A673 (cell line): ENCODE measurements at regions of chr9 and their contacts with region 1.

Region 1: GRCh38 chr9:108761655-108762347 is 94.0 kb downstream of the ACTL7B start:
- DNase-seq: peak; percentile 64
- H3K4me3 ChIP-seq: no peak overlapping the region
- H3K27ac ChIP-seq: no peak overlapping the region
- H3K4me1 ChIP-seq: peaks cover 2% of the 10 kb centered on the region
- H3K27me3 ChIP-seq: no peaks in the 10 kb centered on the region
- CTCF ChIP-seq: peak; percentile 86

Region 2: GRCh38 chr9:107425101-107426045 is 1336.4 kb before region 1 on chr9:
- CTCF ChIA-PET with region 1: no interaction called
- POLR2A ChIA-PET with region 1: no interaction called
- intact Hi-C with region 1: loop called (anchors 2 kb)
- DNase-seq: peak; percentile 73
- H3K4me3 ChIP-seq: no peak overlapping the region
- H3K27ac ChIP-seq: no peak overlapping the region
- H3K4me1 ChIP-seq: no peaks in the 10 kb centered on the region
- H3K27me3 ChIP-seq: no peaks in the 10 kb centered on the region
- CTCF ChIP-seq: peak; percentile 96

Region 3: DNA sequence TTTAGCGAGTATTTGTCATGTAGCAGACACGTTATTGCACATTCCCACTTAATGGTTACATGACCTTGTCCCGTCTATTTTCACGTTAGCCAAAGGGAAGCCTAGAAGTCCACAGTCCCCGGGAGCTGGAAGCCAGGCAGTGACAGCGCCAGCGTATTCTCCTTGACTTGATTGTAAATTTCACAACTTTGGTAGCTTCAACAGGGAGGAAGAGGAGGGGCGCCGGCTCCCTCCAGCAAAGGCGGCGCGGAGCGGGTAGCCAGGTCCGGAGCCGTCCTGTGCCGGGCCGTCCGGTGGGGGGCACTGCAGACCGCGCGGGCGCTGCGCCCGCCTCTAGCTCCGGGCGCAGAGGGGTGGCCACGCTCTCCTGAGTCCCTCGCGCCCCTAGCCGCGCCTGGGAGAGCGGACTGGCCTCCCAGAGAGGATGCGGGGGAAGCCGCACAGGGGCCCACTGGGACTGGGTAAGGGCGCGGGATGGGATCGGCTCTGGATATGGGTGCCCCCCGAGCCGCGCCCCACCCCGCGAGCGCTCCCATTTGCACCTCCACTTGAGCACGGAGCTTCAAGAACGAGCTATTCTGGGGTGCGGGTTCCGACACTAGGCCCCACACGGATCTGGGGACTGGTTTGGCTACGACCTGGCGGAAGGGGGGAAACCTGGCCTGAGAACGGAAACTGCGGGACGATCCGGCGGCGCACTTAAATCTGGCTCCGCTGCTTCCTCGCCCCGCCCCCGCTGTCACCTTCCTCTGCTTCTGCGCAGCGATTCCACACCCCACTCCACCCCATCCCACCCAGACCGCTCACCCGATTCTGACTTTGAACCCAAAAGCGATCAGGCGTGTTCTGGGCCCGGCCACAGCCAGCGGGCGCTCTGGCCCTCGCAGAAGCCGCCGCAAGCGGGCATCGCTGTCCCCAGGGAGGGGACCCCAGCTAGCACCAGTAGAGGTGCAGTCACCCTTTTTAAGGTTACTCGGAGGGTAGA is 1296.0 kb before region 1 on chr9:
- CTCF ChIA-PET with region 1: no interaction called
- POLR2A ChIA-PET with region 1: no interaction called
- intact Hi-C with region 1: loop called (anchors 5 kb)
- DNase-seq: peak; percentile 61
- H3K4me3 ChIP-seq: peak overlapping the region; percentile 29
- H3K27ac ChIP-seq: no peak overlapping the region
- H3K4me1 ChIP-seq: peaks cover 3% of the 10 kb centered on the region
- H3K27me3 ChIP-seq: peaks cover 33% of the 10 kb centered on the region
- CTCF ChIP-seq: peak; percentile 69

Region 4: DNA sequence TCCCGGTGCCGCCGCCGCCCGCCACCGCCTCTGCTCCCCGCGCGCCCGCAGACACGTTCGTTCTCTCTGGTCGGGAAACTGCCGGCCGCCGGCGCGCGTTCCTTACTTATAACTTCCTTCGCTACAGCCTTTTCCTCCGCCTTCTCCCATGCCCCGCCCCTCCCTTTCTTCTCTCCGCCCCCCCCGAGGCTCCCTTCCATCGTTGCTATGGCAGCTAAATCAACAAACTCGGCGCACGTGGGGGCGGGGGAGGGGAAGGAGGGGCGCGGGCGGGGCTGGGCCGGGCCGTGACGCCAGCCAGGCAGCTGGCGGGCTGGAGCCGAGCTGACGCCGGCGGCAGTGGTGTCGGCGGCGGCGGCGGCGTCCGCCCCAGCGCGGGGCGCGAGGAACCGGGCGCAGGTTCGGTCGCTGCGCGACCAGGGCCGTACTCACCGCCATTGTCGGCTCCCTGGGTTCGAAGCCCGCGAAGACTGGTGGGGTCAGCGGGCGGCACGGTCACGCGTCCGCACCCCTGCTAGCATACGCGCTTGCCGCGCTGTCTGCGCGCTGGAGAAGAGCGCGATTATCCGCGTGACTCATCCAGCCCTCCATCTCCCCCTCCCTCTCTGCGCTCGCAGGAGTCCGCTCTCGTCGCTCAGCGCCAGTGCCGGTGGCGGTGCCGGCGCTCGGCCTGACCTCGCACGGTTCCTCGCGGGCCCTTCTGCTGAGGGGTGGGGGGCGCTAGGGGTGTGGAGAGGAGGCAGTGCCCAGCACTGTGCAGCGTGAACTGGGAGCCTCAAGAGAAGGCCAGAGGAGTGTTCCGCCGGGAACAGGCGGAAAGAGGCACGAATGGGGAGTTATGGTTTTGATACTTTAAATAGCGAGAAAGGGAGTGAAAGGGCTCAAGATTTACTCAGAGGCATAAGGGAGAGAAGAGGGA is 1271.9 kb before region 1 on chr9 and contains the start of gene KLF4:
- CTCF ChIA-PET with region 1: no interaction called
- POLR2A ChIA-PET with region 1: no interaction called
- intact Hi-C with region 1: loop called (anchors 5 kb)
- DNase-seq: peak; percentile 95
- H3K4me3 ChIP-seq: peak within 1 kb of the TSS; percentile 40
- H3K27ac ChIP-seq: peak within 1 kb of the TSS; percentile 60
- H3K4me1 ChIP-seq: peaks cover 28% of the 10 kb centered on the region
- H3K27me3 ChIP-seq: peaks cover 50% of the 10 kb centered on the region
- CTCF ChIP-seq: no peak
- total RNA-seq, gene KLF4: 0.28 and 0.49 TPM in 2 replicates

Region 5: DNA sequence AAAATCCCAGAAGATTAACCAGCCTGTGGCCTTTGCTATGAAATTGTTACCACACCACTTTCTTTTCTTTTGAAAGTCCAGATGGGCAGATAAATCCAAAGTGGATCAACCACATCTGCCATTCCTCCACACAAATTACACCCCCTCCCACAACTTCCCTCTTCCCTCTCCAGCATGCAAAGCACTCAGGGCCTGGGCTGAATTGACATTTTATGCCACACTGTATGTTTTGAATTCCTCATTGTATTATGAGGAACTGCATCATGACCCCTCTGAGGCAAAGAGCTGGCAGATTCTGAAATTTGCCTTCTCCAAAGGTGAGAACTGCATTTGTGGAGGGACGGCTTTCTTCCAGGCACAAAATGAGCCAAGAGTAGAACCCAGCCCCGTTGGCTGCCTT is 683.0 kb before region 1 on chr9:
- CTCF ChIA-PET with region 1: no interaction called
- POLR2A ChIA-PET with region 1: no interaction called
- intact Hi-C with region 1: no loop called
- DNase-seq: no peak
- H3K4me3 ChIP-seq: no peak overlapping the region
- H3K27ac ChIP-seq: no peak overlapping the region
- H3K4me1 ChIP-seq: no peaks in the 10 kb centered on the region
- H3K27me3 ChIP-seq: no peaks in the 10 kb centered on the region
- CTCF ChIP-seq: no peak

Region 6: DNA sequence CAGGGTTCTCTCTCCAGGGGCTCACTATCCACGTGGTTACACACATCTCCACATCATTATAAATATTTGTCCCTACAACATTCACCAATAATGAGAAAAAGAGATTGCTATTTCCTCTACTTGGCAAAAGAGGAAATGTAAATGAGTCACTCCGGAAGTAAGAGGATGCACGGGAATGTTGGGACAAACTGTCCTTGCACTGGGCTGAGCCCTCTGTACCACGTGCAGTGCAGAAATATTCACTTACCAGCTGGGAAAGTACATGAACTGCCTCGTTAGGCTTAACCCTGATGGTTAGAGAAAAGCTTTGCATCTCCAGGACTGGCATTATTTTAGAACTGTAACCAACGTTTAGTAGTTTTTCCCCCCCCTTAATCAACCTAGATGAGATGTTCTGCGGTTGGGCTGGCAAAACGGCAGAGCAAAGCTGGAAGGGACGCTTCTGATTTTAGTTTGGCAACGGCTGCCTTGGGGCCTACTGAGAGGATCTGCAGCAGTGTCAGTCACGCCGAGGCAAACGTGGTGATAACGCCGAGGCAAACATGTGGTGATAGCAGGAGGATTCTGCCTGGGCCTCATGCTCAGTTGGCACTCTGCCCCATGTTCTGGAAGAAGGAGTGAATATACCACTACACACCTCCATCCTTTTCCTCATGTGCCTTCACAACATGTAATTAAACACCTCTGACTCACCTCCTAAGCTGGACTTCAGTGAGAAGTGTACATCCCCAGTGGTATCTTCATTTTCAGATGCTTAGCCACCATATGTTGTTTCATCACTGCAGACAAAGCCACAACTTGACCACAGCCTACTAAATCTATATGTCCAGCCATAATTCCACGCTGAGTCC is 610.8 kb before region 1 on chr9:
- CTCF ChIA-PET with region 1: no interaction called
- POLR2A ChIA-PET with region 1: no interaction called
- intact Hi-C with region 1: no loop called
- DNase-seq: peak; percentile 64
- H3K4me3 ChIP-seq: no peak overlapping the region
- H3K27ac ChIP-seq: no peak overlapping the region
- H3K4me1 ChIP-seq: no peaks in the 10 kb centered on the region
- H3K27me3 ChIP-seq: no peaks in the 10 kb centered on the region
- CTCF ChIP-seq: no peak

Region 7: GRCh38 chr9:108272349-108272899 is 489.4 kb before region 1 on chr9:
- CTCF ChIA-PET with region 1: no interaction called
- POLR2A ChIA-PET with region 1: no interaction called
- intact Hi-C with region 1: loop called (anchors 10 kb)
- DNase-seq: peak; percentile 41
- H3K4me3 ChIP-seq: peak overlapping the region; percentile 39
- H3K27ac ChIP-seq: no peak overlapping the region
- H3K4me1 ChIP-seq: peaks cover 5% of the 10 kb centered on the region
- H3K27me3 ChIP-seq: no peaks in the 10 kb centered on the region
- CTCF ChIP-seq: peak; percentile 58

Region 8: GRCh38 chr9:108468402-108468801 is 293.4 kb before region 1 on chr9:
- CTCF ChIA-PET with region 1: no interaction called
- POLR2A ChIA-PET with region 1: no interaction called
- intact Hi-C with region 1: loop called (anchors 1 kb)
- DNase-seq: peak; percentile 75
- H3K4me3 ChIP-seq: no peak overlapping the region
- H3K27ac ChIP-seq: no peak overlapping the region
- H3K4me1 ChIP-seq: no peaks in the 10 kb centered on the region
- H3K27me3 ChIP-seq: no peaks in the 10 kb centered on the region
- CTCF ChIP-seq: peak; percentile 75

Region 9: GRCh38 chr9:108565651-108566378 is 196.0 kb before region 1 on chr9:
- CTCF ChIA-PET with region 1: no interaction called
- POLR2A ChIA-PET with region 1: no interaction called
- intact Hi-C with region 1: loop called (anchors 5 kb)
- DNase-seq: peak; percentile 90
- H3K4me3 ChIP-seq: no peak overlapping the region
- H3K27ac ChIP-seq: no peak overlapping the region
- H3K4me1 ChIP-seq: no peaks in the 10 kb centered on the region
- H3K27me3 ChIP-seq: no peaks in the 10 kb centered on the region
- CTCF ChIP-seq: peak; percentile 90

Region 10: DNA sequence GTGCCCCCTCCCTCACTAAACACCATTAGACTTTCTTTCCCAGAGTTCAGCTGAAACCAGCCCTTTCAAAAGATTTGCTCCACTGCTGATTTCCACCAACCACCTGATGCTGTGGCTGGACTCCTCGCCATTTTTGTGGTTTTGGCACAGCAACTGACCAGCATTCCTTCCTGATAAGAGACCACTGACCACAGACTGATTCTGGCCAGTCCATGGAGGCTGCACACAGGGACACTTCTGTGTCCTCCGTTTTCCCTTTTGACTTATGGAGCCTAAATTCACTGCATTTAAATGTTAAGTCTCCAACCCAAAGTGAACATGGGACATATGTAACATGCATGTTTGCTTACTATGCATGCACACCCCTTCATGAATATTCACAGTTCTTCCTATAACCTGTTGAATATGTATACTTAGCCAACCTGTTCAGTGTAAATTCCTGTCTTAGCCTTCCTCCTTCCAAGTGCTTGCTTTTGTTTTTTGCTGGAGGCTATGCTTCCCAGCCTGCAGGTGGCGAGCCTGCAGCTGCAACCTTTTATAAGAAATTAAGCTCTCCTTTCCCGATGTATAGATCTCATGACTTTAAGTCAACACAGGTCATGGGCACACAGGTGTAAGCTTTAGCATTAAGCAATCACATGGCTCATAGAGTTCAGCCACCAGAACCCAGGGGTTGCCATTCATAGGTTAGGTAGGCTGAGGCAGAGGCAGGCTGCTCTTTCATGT is 15.3 kb after region 1 on chr9:
- CTCF ChIA-PET with region 1: no interaction called
- POLR2A ChIA-PET with region 1: no interaction called
- intact Hi-C with region 1: no loop called
- DNase-seq: no peak
- H3K4me3 ChIP-seq: no peak overlapping the region
- H3K27ac ChIP-seq: no peak overlapping the region
- H3K4me1 ChIP-seq: no peaks in the 10 kb centered on the region
- H3K27me3 ChIP-seq: no peaks in the 10 kb centered on the region
- CTCF ChIP-seq: peak; percentile 52